ENCODE measurements at regions of chr5 and their contacts with region 1.

Region 1: DNA sequence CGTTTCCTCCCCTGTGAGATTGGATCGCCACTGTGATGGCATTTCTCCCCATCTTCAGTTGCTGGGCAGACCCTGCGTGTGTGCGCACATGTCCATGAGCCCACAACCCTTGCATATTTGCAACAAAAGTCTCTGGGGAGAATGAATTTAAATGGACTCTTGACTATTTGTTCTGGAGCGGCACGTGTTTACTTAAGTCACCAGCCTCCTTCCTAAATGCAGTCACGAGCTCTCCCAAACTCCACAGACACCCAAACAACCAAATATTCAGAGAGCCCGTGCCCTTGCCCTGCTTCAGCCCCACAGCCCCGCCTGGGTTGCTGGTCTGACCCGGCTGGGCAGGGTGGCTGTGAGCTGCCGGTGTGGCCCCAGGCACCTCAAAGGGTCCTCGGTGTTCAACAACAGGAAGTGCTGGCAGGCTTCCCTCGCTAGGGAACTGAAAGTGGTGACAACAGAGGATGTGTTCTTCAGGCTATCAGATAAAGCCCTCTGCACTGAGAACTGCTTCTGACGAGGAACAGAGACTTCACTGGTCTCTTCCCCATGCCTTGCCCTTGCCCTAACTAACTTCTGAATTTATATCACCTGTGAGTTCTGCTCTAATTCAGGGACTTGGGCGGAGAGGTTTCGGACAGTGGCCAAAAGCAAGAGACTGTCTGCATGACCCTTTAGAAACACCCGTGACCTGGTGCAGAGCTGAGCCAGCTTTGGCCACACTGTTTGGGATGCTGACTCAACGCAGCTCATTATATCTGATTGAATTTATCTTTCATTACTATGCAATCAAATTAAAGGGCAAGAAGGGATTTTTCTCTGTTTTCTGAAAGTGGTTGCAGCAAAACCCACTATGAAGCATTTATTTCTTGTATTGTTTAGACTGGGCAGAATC is 19.2 kb upstream of the CD180 start:
- DNase-seq: no peak
- H3K4me3 ChIP-seq: no peak overlapping the region
- H3K27ac ChIP-seq: no peak overlapping the region
- H3K4me1 ChIP-seq: no peaks in the 10 kb centered on the region
- H3K27me3 ChIP-seq: no peaks in the 10 kb centered on the region
- CTCF ChIP-seq: no peak

Region 2: DNA sequence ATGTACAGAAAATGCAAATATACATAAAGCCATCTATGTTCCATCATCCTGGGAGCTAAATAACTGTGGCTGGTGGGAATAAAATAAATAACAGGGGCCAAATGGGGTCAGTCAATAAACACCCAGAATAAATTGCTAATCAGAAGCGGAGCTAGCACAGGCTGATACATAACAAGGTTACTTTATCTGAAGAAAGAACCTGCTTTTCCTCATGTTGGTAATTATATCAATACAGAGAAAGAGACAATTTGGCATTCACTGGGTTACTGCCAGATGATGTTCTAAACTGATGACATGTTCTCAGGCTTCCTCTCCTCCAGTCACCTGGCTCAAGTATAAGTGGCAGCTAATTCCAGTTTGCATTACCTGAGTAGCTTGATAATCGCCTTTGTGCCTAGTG is 125.7 kb after region 1 on chr5:
- CTCF ChIA-PET with region 1: no interaction called
- POLR2A ChIA-PET with region 1: no interaction called
- intact Hi-C with region 1: no loop called
- DNase-seq: no peak
- H3K4me3 ChIP-seq: no peak overlapping the region
- H3K27ac ChIP-seq: no peak overlapping the region
- H3K4me1 ChIP-seq: peaks cover 16% of the 10 kb centered on the region
- H3K27me3 ChIP-seq: no peaks in the 10 kb centered on the region
- CTCF ChIP-seq: no peak

Region 3: GRCh38 chr5:68711293-68712200 is 1495.7 kb after region 1 on chr5:
- CTCF ChIA-PET with region 1: no interaction called
- POLR2A ChIA-PET with region 1: interaction called, 11 read pairs
- intact Hi-C with region 1: no loop called
- DNase-seq: no peak
- H3K4me3 ChIP-seq: no peak overlapping the region
- H3K27ac ChIP-seq: no peak overlapping the region
- H3K4me1 ChIP-seq: no peaks in the 10 kb centered on the region
- H3K27me3 ChIP-seq: no peaks in the 10 kb centered on the region
- CTCF ChIP-seq: no peak